PC-3 (cell line): ENCODE measurements at regions of chr12 and their contacts with region 1.

Region 1: GRCh38 chr12:65602610-65603295 is 221.5 kb upstream of the HMGA2 start:
- DNase-seq: peak; percentile 93
- ATAC-seq: peak; percentile 70
- H3K4me3 ChIP-seq: peak overlapping the region; percentile 59
- H3K27ac ChIP-seq: peak overlapping the region; percentile 96
- H3K4me1 ChIP-seq: peaks cover 70% of the 10 kb centered on the region
- H3K27me3 ChIP-seq: no peaks in the 10 kb centered on the region
- CTCF ChIP-seq: peak; percentile 93

Region 2: GRCh38 chr12:65392491-65392890 is 210.3 kb before region 1 on chr12:
- CTCF ChIA-PET with region 1: no interaction called
- POLR2A ChIA-PET with region 1: no interaction called
- intact Hi-C with region 1: no loop called
- DNase-seq: no peak
- ATAC-seq: no peak
- H3K4me3 ChIP-seq: no peak overlapping the region
- H3K27ac ChIP-seq: no peak overlapping the region
- H3K4me1 ChIP-seq: no peaks in the 10 kb centered on the region
- H3K27me3 ChIP-seq: no peaks in the 10 kb centered on the region
- CTCF ChIP-seq: no peak

Region 3: GRCh38 chr12:65536876-65537661 is 65.7 kb before region 1 on chr12:
- CTCF ChIA-PET with region 1: interaction called, 10 read pairs
- POLR2A ChIA-PET with region 1: interaction called, 3 read pairs
- intact Hi-C with region 1: loop called (anchors 5 kb)
- DNase-seq: peak; percentile 99
- ATAC-seq: peak; percentile 75
- H3K4me3 ChIP-seq: peak overlapping the region; percentile 3; the same call in 1 of the 2 replicates
- H3K27ac ChIP-seq: peak overlapping the region; percentile 89
- H3K4me1 ChIP-seq: peaks cover 58% of the 10 kb centered on the region
- H3K27me3 ChIP-seq: no peaks in the 10 kb centered on the region
- CTCF ChIP-seq: no peak

Region 4: GRCh38 chr12:65631621-65632111 is 28.9 kb after region 1 on chr12:
- CTCF ChIA-PET with region 1: interaction called, 4 read pairs
- POLR2A ChIA-PET with region 1: interaction called, 5 read pairs
- intact Hi-C with region 1: loop called (anchors 1 kb)
- DNase-seq: peak; percentile 99
- ATAC-seq: peak; percentile 49
- H3K4me3 ChIP-seq: no peak overlapping the region; the same call in 1 of the 2 replicates
- H3K27ac ChIP-seq: peak overlapping the region; percentile 99
- H3K4me1 ChIP-seq: peaks cover 65% of the 10 kb centered on the region
- H3K27me3 ChIP-seq: no peaks in the 10 kb centered on the region
- CTCF ChIP-seq: no peak

Region 5: DNA sequence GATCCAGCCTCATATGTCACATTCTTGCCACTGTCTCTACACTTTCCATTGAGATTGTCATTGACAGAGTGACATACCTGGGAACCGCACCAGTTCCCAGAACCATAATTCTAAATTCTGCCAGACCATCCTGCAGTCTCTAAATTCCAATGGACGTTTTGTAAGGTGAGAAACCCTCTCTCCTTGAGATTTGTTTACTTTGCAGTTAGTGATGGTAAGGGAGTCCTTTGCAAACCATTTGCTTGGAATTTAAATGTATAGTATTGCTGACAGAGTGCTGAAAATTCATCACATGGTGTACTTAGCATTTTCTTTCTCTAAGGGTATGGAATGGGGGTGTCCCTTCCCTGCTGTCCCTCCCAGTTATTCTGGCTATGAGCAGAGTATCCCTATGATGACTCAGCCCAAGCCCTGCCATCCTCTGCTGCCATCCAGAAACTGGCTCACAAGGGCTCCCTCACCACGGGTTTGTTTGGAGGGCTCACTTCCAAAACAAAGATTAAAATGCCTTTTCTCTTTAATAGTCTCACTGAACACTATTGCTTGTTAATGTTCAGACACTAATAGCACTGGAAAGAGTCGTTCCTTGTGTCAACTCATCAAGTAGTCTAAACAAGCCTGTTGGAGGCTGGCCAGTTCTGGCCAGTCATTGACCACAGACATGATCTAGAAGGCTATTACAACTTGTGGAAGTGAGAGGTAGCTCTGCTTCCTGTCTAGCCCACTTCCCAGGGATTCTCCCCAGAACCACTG is 92.5 kb after region 1 on chr12:
- CTCF ChIA-PET with region 1: interaction called, 12 read pairs
- POLR2A ChIA-PET with region 1: no interaction called
- intact Hi-C with region 1: loop called (anchors 1 kb)
- DNase-seq: peak; percentile 99
- ATAC-seq: peak; percentile 90
- H3K4me3 ChIP-seq: no peak overlapping the region
- H3K27ac ChIP-seq: peak overlapping the region; percentile 85
- H3K4me1 ChIP-seq: peaks cover 45% of the 10 kb centered on the region
- H3K27me3 ChIP-seq: no peaks in the 10 kb centered on the region
- CTCF ChIP-seq: no peak

Region 6: DNA sequence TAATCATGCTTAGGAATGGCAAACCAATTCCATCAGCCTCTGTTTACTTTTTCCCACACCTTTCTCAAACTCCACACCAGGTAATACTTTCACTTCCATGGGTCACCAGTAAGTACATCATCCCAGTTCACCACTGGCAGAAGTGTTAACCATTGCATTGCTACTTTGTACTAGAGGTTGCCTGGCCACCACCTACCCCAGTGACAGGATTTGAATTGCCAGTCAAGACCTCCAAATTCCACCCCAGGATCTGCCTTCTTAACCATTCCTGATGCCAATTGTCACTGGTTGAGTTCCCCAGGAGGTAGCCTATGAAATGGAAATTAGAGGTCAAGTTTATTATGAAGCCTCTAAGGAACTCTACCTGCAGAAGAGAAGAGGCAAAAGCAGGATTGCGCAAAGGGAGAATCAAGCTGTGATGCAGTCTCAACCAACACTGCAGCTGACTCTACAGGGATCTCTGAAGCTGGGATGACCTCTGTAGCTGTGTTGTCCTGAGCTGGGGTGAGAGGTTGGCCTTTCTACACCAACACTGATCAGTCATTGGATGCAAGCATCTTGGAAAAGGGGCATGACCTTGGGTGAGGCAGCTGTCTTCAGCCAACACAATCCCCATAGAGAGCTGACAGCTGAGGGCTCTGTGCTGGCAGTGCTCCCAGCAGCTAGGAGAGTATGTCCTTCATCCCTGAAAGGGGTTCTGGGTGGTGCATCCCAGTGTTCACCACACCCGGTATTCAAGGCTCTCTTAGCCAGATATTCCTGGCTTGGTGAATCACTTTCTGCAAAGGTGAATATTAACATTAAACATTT is 184.5 kb after region 1 on chr12:
- CTCF ChIA-PET with region 1: no interaction called
- POLR2A ChIA-PET with region 1: no interaction called
- intact Hi-C with region 1: no loop called
- DNase-seq: no peak
- ATAC-seq: 0 out of 2 replicates have a peak, but pooled peaks have one; percentile 18
- H3K4me3 ChIP-seq: no peak overlapping the region
- H3K27ac ChIP-seq: no peak overlapping the region
- H3K4me1 ChIP-seq: no peaks in the 10 kb centered on the region
- H3K27me3 ChIP-seq: no peaks in the 10 kb centered on the region
- CTCF ChIP-seq: no peak

Region 7: DNA sequence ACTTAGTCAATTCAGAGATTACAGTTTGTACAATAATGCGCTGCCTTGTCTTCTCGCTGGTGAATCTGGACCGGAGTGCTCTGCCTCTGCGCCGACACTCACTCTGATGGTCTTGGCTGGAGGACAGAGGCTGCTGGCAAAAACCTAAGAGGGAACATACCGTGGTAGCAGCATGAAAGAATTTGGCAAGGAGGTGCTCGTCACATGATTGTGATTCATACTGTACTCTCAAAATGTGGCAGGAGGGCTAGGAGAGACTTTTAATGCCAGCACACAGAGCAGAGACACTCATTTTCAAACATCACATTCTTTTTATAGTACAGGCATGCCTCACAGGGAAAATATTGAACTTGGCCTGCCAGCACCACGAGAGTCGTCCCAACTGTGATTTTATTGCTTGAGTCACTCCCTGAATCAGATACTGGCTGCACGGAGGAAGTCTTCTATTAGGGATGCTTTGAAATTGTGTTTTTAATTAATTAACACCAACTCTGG is 289.3 kb after region 1 on chr12:
- CTCF ChIA-PET with region 1: no interaction called
- POLR2A ChIA-PET with region 1: no interaction called
- intact Hi-C with region 1: loop called (anchors 5 kb)
- DNase-seq: peak; percentile 97
- ATAC-seq: peak; percentile 74
- H3K4me3 ChIP-seq: peak overlapping the region; percentile 36; the same call in 1 of the 2 replicates
- H3K27ac ChIP-seq: peak overlapping the region; percentile 95
- H3K4me1 ChIP-seq: peaks cover 81% of the 10 kb centered on the region
- H3K27me3 ChIP-seq: no peaks in the 10 kb centered on the region
- CTCF ChIP-seq: no peak